ENCODE measurements at regions of chr5 and their contacts with region 1.

Region 1: GRCh38 chr5:159227452-159227851 is 18.1 kb upstream of the RNF145 start:
- DNase-seq: peak; percentile 97
- H3K4me3 ChIP-seq: no peak overlapping the region
- H3K27ac ChIP-seq: peak overlapping the region; percentile 88
- H3K4me1 ChIP-seq: peaks cover 42% of the 10 kb centered on the region
- H3K27me3 ChIP-seq: no peaks in the 10 kb centered on the region
- CTCF ChIP-seq: no peak

Region 2: DNA sequence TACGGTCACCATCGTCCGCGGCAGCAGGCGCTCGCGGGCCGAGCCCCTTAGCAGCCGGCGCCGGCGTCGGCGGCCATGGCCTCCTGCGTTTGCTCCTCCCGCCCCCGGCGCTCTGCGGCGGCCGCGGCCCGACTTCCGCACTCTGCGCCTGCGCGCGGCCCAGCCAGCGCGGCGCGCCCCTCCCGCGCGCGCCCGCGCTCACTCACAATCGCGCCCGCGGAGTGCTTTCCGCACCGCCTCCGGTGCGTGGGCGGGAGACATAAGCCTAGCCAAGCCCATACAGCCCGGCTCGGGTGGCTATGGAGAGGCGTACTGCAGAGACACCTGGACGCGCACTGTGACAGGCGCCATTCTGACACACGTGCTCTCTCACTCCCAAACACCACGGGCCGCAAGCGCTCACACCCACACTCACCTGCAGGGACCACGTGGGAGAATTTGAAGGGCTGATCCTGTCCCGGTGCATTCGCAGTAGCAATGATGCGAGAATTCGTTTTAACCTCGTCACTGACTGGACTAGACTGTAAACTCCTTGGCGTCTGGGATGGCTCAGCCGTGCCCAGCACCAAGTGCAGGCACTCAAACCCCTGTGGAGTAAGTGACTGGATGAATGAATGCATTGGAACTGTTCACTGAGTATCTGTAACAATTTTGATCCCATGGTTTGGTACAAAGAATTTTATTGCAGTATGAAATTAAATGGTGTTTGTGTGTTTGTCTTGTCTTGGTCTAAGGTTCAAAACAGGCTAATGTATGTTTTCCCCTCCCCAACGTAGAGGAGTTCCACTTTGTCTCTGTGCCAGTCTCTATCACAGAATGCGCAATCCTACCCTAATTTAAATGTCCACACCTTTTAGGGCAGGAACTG is 17.8 kb before region 1 on chr5 and contains the start of gene RNF145:
- CTCF ChIA-PET with region 1: no interaction called
- dilution Hi-C with region 1: no loop called
- in situ Hi-C with region 1: no loop called
- intact Hi-C with region 1: loop called (anchors 1 kb)
- DNase-seq: peak; percentile 91
- H3K4me3 ChIP-seq: peak within 1 kb of the TSS; percentile 77 to 89 (median 79)
- H3K27ac ChIP-seq: peak within 1 kb of the TSS; percentile 90
- H3K4me1 ChIP-seq: peaks cover 20% of the 10 kb centered on the region
- H3K27me3 ChIP-seq: no peaks in the 10 kb centered on the region
- CTCF ChIP-seq: no peak
- total RNA-seq, gene RNF145: 63.2 to 78.9 TPM

Region 3: GRCh38 chr5:159478950-159479349 is 251.5 kb after region 1 on chr5:
- CTCF ChIA-PET with region 1: no interaction called
- dilution Hi-C with region 1: no loop called
- in situ Hi-C with region 1: no loop called
- intact Hi-C with region 1: no loop called
- DNase-seq: no peak
- H3K4me3 ChIP-seq: no peak overlapping the region
- H3K27ac ChIP-seq: no peak overlapping the region
- H3K4me1 ChIP-seq: no peaks in the 10 kb centered on the region
- H3K27me3 ChIP-seq: no peaks in the 10 kb centered on the region
- CTCF ChIP-seq: no peak

Region 4: GRCh38 chr5:159504857-159505304 is 277.4 kb after region 1 on chr5:
- CTCF ChIA-PET with region 1: no interaction called
- dilution Hi-C with region 1: no loop called
- in situ Hi-C with region 1: no loop called
- intact Hi-C with region 1: no loop called
- DNase-seq: peak; percentile 57
- H3K4me3 ChIP-seq: no peak overlapping the region
- H3K27ac ChIP-seq: no peak overlapping the region
- H3K4me1 ChIP-seq: no peaks in the 10 kb centered on the region
- H3K27me3 ChIP-seq: no peaks in the 10 kb centered on the region
- CTCF ChIP-seq: no peak